GM12878 (cell line): ENCODE measurements at regions of chr3 and their contacts with region 1.

Region 1: DNA sequence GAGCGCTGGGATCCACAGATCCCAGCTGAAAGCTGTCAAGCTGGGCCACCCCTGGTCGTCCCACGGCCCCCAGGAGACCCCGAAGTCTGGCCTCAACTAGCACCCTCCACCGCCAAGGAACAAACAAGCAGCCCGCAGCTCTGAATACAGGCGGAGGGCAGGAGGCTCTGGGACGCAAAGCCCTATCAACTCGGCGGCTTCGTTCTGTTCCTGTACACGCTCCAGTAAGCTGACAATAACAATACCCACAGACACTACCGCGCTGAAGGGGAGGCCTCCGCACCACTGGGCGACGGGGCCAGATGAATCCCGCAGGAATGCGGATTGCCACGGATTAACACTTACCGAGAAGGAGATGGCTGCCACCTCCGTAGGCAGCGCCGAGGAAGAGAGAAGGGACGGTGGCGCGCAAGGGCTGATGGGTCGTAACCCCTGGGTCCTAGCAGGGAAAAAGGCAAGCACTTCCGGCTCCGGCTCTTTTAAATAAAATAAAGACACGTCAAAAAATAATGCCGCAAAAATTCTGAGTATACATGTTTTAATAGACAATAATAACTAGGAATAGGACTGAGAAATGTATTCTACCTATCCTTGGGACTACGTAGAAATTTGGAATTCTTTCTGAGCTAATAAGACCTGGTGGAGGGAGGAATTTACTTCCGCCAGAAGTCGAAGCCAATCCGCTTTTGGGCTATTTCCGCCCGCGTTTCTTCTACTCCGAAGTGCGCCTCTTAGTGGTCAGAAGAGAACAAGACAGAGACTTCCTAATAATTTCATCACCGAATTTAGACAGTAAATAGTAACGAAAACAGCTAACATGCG is at the start of gene RPL32:
- DNase-seq: peak; percentile 88
- ATAC-seq: peak; percentile 87
- H3K4me3 ChIP-seq: peak within 1 kb of the TSS; percentile 98
- H3K27ac ChIP-seq: peak within 1 kb of the TSS; percentile 90
- H3K4me1 ChIP-seq: peaks cover 8% of the 10 kb centered on the region; the same call in 1 of the 2 replicates
- H3K27me3 ChIP-seq: no peaks in the 10 kb centered on the region
- CTCF ChIP-seq: peak; percentile 74 to 88 (median 86)
- EP300 ChIP-seq: peak in 1 of 2 experiments; percentile 5; a peak in 1 of 4 replicates
- POLR2A ChIP-seq: peak; percentile 98
- RAD21 ChIP-seq: peak; percentile 37
- polyA plus RNA-seq, gene RPL32: 3,252 to 3,662 TPM

Region 2: DNA sequence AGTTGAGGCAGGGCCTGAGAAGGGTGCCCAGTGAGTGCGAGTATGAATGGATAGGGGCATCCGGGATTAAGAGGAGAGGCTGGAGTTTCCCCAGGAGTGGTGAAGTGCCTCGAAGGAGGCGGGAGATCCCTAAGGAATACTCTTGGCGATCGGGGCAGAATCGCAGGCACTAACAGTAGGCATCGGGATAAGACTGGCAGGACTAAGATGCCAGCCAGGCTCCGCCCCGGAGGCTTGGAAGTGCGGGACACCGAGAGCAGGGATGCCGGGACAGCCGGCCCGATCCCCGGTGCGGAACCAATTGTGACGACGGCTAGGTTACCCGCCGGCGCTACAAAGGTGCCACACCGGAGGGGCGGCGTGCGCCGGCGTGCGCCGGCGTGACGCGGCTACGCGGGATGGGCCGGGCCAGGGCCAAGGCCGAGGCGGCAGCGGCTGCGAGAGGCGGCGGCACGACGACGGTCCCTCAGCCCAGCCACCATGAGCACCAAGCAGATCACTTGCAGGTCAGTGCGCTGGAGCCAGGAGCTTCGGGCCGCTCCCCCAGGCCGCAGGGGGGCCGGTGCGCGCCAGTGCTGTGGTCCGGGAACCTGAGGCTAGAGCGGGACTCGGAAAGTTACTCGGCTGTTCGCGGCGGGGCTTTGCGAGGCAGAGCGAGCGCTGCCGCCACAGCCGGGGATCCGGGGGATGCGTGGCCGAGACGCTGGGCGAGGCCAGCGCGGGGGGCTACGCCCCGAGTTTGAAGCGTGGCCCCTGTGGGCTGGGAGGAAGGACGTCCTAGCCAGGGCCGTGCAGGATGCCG is 284.5 kb before region 1 on chr3 and contains the start of gene MKRN2:
- CTCF ChIA-PET with region 1: no interaction called
- POLR2A ChIA-PET with region 1: no interaction called
- RAD21 ChIA-PET with region 1: interaction called, 3 read pairs
- SMC1A ChIA-PET with region 1: no interaction called
- in situ Hi-C with region 1: no loop called
- intact Hi-C with region 1: loop called (anchors 5 kb)
- DNase-seq: peak; percentile 33
- ATAC-seq: peak; percentile 89
- H3K4me3 ChIP-seq: peak within 1 kb of the TSS; percentile 95
- H3K27ac ChIP-seq: peak within 1 kb of the TSS; percentile 89
- H3K4me1 ChIP-seq: peaks cover 22% of the 10 kb centered on the region
- H3K27me3 ChIP-seq: no peaks in the 10 kb centered on the region
- CTCF ChIP-seq: no peak
- EP300 ChIP-seq: no peak
- POLR2A ChIP-seq: peak; percentile 99
- RAD21 ChIP-seq: no peak
- polyA plus RNA-seq, gene MKRN2: 15.4 to 21.8 TPM

Region 3: GRCh38 chr3:12810013-12810780 is 31.2 kb before region 1 on chr3:
- CTCF ChIA-PET with region 1: interaction called, 16 read pairs
- POLR2A ChIA-PET with region 1: interaction called, 3 read pairs
- RAD21 ChIA-PET with region 1: interaction called, 3 read pairs
- SMC1A ChIA-PET with region 1: no interaction called
- in situ Hi-C with region 1: no loop called
- intact Hi-C with region 1: no loop called
- DNase-seq: peak; percentile 41
- ATAC-seq: peak; percentile 100
- H3K4me3 ChIP-seq: peak overlapping the region; percentile 70; the same call in 1 of the 2 replicates
- H3K27ac ChIP-seq: no peak overlapping the region
- H3K4me1 ChIP-seq: no peaks in the 10 kb centered on the region
- H3K27me3 ChIP-seq: peaks cover 0 to 2% of the 10 kb centered on the region in 2 experiments; a peak in 1 of 4 replicates
- CTCF ChIP-seq: peak; percentile 53 to 77 (median 71)
- EP300 ChIP-seq: no peak
- POLR2A ChIP-seq: no peak
- RAD21 ChIP-seq: 0 out of 2 replicates have a peak, but pooled peaks have one; percentile 24

Region 4: DNA sequence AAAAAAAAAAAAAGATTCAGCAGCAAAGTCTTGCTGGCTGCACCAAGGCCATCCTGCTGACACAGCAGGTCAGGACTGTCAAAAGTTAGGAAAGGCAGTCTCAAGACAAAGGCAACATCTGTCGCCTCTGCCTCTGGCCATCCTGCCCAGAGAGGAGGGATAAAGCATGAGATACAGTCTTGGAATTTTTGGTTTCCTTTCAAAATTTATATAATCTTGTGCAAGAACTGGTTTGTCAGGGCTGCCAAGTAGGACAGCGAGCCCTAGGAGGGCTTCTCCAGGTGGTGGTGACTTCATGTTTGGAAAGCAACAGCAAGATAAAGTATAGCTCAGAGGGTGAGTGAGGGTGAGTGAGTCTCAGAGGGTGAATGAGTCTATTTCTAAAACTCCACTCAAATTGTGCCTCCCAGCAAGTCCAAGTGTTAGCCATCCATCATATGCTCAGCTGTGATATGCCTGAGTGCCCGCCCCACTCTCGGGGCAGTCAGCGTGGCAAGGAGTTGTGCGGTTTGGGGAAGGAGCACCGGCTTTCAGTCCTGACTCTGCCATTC is 11.9 kb after region 1 on chr3:
- CTCF ChIA-PET with region 1: interaction called, 16 read pairs
- POLR2A ChIA-PET with region 1: no interaction called
- RAD21 ChIA-PET with region 1: no interaction called
- SMC1A ChIA-PET with region 1: interaction called, 7 read pairs
- in situ Hi-C with region 1: no loop called
- intact Hi-C with region 1: no loop called
- DNase-seq: no peak
- ATAC-seq: no peak
- H3K4me3 ChIP-seq: no peak overlapping the region
- H3K27ac ChIP-seq: no peak overlapping the region
- H3K4me1 ChIP-seq: no peaks in the 10 kb centered on the region
- H3K27me3 ChIP-seq: peaks cover 2% of the 10 kb centered on the region in 2 experiments; a peak in 2 of 4 replicates
- CTCF ChIP-seq: no peak
- EP300 ChIP-seq: no peak
- POLR2A ChIP-seq: no peak
- RAD21 ChIP-seq: no peak

Region 5: GRCh38 chr3:12891985-12892839 is 50.9 kb after region 1 on chr3:
- CTCF ChIA-PET with region 1: interaction called, 27 read pairs
- POLR2A ChIA-PET with region 1: interaction called, 3 read pairs
- RAD21 ChIA-PET with region 1: interaction called, 3 read pairs
- SMC1A ChIA-PET with region 1: interaction called, 12 read pairs
- in situ Hi-C with region 1: no loop called
- intact Hi-C with region 1: no loop called
- DNase-seq: no peak
- ATAC-seq: peak; percentile 26
- H3K4me3 ChIP-seq: no peak overlapping the region
- H3K27ac ChIP-seq: no peak overlapping the region
- H3K4me1 ChIP-seq: peaks cover 19% of the 10 kb centered on the region
- H3K27me3 ChIP-seq: no peaks in the 10 kb centered on the region
- CTCF ChIP-seq: peak; percentile 82 to 97 (median 95)
- EP300 ChIP-seq: no peak
- POLR2A ChIP-seq: no peak
- RAD21 ChIP-seq: peak; percentile 98

Region 6: DNA sequence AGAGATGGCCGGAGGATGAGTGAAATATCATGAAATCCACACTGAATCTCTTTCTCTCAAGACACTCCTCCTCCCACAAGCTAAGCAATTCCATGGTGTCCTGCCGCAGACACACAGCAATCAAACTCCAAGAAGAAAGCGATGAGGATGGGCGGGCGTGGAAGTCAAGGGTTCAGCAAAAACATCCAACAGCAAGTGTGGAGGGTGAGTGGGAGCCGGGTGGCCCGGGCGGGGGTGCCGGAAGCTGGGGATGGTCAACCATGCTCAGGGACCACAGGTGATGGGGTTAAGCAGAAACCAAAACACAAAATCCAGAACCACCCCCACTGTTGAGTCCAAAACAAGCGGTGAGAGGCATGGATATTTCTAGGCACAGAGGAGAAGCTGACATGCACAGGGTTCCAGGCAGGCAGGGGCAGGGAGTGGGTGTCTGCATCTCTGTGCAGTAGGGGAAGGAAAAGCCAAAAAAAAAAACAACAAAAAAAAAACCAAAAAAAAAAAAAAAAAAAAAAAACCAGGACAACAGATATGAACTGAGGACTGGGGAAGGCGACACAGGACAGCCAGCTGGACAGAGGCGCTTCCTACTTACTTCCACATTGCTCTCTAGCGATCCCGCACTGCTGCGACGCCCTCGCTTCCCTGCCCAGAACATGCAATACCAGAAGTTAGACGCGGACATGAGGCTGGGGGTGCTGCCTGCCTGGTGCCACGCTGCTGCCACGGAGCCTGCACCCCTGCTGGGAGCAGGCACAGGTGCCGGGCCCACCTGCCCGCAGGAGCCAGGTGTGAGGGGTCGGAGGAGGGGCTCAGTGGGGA is 61.0 kb after region 1 on chr3:
- CTCF ChIA-PET with region 1: no interaction called
- POLR2A ChIA-PET with region 1: no interaction called
- RAD21 ChIA-PET with region 1: no interaction called
- SMC1A ChIA-PET with region 1: no interaction called
- in situ Hi-C with region 1: no loop called
- intact Hi-C with region 1: no loop called
- DNase-seq: no peak
- ATAC-seq: no peak
- H3K4me3 ChIP-seq: no peak overlapping the region
- H3K27ac ChIP-seq: no peak overlapping the region
- H3K4me1 ChIP-seq: no peaks in the 10 kb centered on the region
- H3K27me3 ChIP-seq: no peaks in the 10 kb centered on the region
- CTCF ChIP-seq: no peak
- EP300 ChIP-seq: no peak
- POLR2A ChIP-seq: no peak
- RAD21 ChIP-seq: no peak